Activated CD4-positive, alpha-beta memory T cell treated with anti-CD3 and anti-CD28 coated beads for 36 hours (primary cell): ENCODE measurements at regions of chrX and their contacts with region 1.

Region 1: GRCh38 chrX:154443992-154444754 is at the start of gene FAM50A:
- DNase-seq: peak; percentile 78
- H3K4me3 Mint-ChIP-seq: peak within 1 kb of the TSS; percentile 70
- H3K27ac Mint-ChIP-seq: no peak within 1 kb of the TSS
- H3K4me1 Mint-ChIP-seq: peaks cover 19% of the 10 kb centered on the region
- H3K27me3 Mint-ChIP-seq: no peaks in the 10 kb centered on the region
- total RNA-seq, gene FAM50A: 61.1 to 61.9 TPM

Region 2: DNA sequence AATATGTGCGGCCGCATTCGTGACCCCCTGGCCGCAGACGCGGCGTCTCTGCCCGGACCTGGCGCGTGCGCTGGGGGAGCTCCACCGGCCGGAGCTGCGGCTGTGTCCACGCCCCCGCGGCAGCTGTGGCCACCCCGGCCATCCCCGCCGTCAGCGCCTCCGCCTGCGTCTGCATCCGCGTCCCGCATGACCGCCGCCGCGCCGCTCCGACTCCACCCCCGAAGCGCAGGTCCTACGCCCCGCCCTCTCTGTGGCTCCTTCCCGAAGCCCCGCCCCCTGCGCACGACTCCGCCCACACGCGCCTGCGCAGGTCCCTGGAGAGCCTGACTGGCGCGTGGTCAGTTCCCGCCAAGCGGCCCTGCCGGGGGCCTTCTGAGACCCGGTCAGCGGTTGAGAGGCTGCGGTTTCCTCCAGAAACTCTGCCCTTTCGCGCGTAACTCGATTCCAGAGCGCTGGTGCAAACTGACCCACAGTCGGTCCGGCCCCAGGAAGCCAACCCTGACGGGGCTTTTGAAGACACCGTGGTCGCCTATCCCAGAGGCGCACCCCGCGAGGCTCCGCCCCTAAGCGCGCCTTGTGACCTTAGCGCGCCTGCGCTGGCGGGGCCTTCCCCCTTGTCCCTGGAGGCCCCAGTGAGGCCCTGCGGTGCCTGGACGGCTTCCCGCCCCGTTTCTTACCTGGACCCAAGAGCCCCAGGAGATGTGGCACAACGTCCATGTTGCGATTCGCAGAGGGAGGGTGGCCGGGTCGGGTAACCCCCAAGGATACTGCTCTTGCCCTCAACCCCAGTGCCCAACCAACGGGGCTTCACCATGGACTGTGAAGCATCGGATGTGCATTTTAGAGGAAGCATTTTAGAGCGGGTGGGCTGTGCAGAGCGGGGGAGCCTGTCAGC is 34.8 kb after region 1 on chrX and contains the start of gene LAGE3:
- CTCF ChIA-PET with region 1: no interaction called
- POLR2A ChIA-PET with region 1: no interaction called
- intact Hi-C with region 1: loop called (anchors 5 kb)
- DNase-seq: peak; percentile 96
- H3K4me3 Mint-ChIP-seq: peak within 1 kb of the TSS; percentile 81
- H3K27ac Mint-ChIP-seq: peak within 1 kb of the TSS; percentile 95
- H3K4me1 Mint-ChIP-seq: peaks cover 19% of the 10 kb centered on the region
- H3K27me3 Mint-ChIP-seq: no peaks in the 10 kb centered on the region
- total RNA-seq, gene LAGE3: 45.5 to 47.7 TPM